ENCODE measurements at regions of chr18 and their contacts with region 1.

Region 1: GRCh38 chr18:267688-268552 is at the start of gene THOC1:
- DNase-seq: peak; percentile 92 to 96 (median 92)
- ATAC-seq: peak; percentile 90
- H3K4me3 ChIP-seq: peak within 1 kb of the TSS; percentile 80
- H3K27ac ChIP-seq: peak within 1 kb of the TSS; percentile 98
- H3K4me1 ChIP-seq: peaks cover 17 to 29% of the 10 kb centered on the region in 2 experiments
- H3K27me3 ChIP-seq: no peaks in the 10 kb centered on the region
- CTCF ChIP-seq: peak in 2 of 3 experiments; percentile 5 to 16; a peak in 1 of 6 replicates
- EP300 ChIP-seq: peak; percentile 71
- POLR2A ChIP-seq: peak; percentile 98
- RAD21 ChIP-seq: peak in 1 of 2 experiments; percentile 12; a peak in 2 of 4 replicates
- polyA plus RNA-seq, gene THOC1: 87.1 to 139 TPM

Region 2: GRCh38 chr18:255171-255570 is 12.7 kb before region 1 on chr18:
- CTCF ChIA-PET with region 1: no interaction called
- POLR2A ChIA-PET with region 1: interaction called, 20 read pairs
- in situ Hi-C with region 1: no loop called
- intact Hi-C with region 1: no loop called
- DNase-seq: peak in 1 of 4 experiments; percentile 19
- ATAC-seq: no peak
- H3K4me3 ChIP-seq: no peak overlapping the region
- H3K27ac ChIP-seq: no peak overlapping the region
- H3K4me1 ChIP-seq: peaks cover 0 to 5% of the 10 kb centered on the region in 2 experiments; a peak in 2 of 5 replicates
- H3K27me3 ChIP-seq: no peaks in the 10 kb centered on the region
- CTCF ChIP-seq: no peak
- EP300 ChIP-seq: no peak
- POLR2A ChIP-seq: no peak
- RAD21 ChIP-seq: no peak

Region 3: GRCh38 chr18:551404-552061 is 283.6 kb after region 1 on chr18:
- CTCF ChIA-PET with region 1: no interaction called
- POLR2A ChIA-PET with region 1: no interaction called
- in situ Hi-C with region 1: no loop called
- intact Hi-C with region 1: no loop called
- DNase-seq: no peak
- ATAC-seq: peak; percentile 45; the same call in 2 of the 3 replicates
- H3K4me3 ChIP-seq: no peak overlapping the region
- H3K27ac ChIP-seq: no peak overlapping the region
- H3K4me1 ChIP-seq: no peaks in the 10 kb centered on the region
- H3K27me3 ChIP-seq: peaks cover 4% of the 10 kb centered on the region in 2 experiments; a peak in 2 of 5 replicates
- CTCF ChIP-seq: no peak
- EP300 ChIP-seq: no peak
- POLR2A ChIP-seq: no peak
- RAD21 ChIP-seq: no peak

Measured in K562 (cell line).